Activated CD8-positive, alpha-beta T cell treated with anti-CD3 and anti-CD28 coated beads for 36 hours (primary cell): ENCODE measurements at regions of chr3 and their contacts with region 1.

Region 1: DNA sequence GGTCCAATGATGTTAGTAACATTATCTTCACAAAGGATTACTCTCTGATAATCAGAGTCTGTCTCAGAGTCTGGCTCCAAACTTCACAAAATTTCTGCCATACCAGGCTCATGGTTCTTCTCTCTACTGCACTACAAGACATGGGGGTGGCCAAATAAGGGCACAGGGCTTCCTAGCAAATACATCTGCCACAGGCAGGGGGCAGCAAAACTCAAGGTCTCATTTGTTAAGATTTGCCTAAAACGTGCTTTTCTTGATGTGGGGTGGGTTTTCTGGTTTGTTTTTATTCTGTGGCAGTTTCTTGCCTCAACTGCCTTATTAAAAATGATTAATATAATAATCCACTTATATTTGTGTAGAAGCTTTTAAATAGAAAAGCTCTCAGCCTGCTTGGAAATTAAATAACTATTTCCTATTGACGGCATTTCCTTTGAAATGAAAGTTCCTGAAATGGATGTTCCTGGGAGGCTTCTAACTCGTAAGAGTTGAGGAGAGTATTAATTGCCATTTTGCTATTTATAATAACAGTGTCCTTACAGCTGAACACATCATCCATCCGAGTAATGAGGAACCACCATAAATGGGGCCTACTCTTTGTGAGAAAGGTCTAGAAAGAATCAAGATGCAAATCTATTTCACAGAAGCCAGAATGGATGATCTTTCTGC is 53.8 kb downstream of the SST start:
- DNase-seq: peak; percentile 77
- ATAC-seq: peak; percentile 70
- H3K4me3 Mint-ChIP-seq: no peak overlapping the region
- H3K27ac Mint-ChIP-seq: no peak overlapping the region
- H3K4me1 Mint-ChIP-seq: peaks cover 4% of the 10 kb centered on the region
- H3K27me3 Mint-ChIP-seq: peaks cover 12% of the 10 kb centered on the region
- CTCF ChIP-seq: peak; percentile 79

Region 2: GRCh38 chr3:187565701-187566100 is 50.7 kb before region 1 on chr3:
- CTCF ChIA-PET with region 1: interaction called, 12 read pairs
- POLR2A ChIA-PET with region 1: no interaction called
- intact Hi-C with region 1: no loop called
- DNase-seq: no peak
- ATAC-seq: no peak
- H3K4me3 Mint-ChIP-seq: no peak overlapping the region
- H3K27ac Mint-ChIP-seq: no peak overlapping the region
- H3K4me1 Mint-ChIP-seq: no peaks in the 10 kb centered on the region
- H3K27me3 Mint-ChIP-seq: peaks cover 18% of the 10 kb centered on the region
- CTCF ChIP-seq: no peak

Region 3: DNA sequence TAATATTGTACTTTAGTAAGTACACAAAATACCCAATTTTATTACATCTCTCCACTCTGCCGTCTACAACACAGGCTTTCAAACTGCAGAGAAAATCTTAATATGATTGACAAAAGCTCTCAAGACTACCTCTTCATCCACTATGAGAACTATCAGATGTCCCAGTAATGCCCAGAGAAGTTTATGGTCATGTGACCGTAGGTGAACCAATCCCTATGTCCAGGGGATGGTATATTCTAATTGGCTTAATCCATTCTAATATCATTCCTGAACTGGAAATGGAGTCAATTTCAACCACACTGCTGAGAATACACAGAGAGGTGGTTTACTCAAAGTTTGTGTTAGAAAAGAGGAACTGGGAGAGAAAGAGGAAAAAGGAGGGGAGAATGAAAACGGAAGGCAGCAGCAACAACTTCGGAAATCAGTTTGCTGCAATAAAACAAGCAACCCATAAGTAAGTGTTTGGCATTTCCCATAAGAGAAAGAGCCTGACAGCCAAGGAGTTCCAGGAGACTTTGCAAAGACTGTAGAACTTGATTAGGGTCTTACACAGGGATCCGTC is 46.5 kb after region 1 on chr3:
- CTCF ChIA-PET with region 1: interaction called, 27 read pairs
- POLR2A ChIA-PET with region 1: no interaction called
- intact Hi-C with region 1: no loop called
- DNase-seq: no peak
- ATAC-seq: no peak
- H3K4me3 Mint-ChIP-seq: no peak overlapping the region
- H3K27ac Mint-ChIP-seq: no peak overlapping the region
- H3K4me1 Mint-ChIP-seq: peaks cover 7% of the 10 kb centered on the region
- H3K27me3 Mint-ChIP-seq: peaks cover 25% of the 10 kb centered on the region
- CTCF ChIP-seq: no peak

Region 4: GRCh38 chr3:187669675-187670504 is 53.5 kb after region 1 on chr3 and contains the start of gene SST:
- CTCF ChIA-PET with region 1: interaction called, 27 read pairs
- POLR2A ChIA-PET with region 1: interaction called, 5 read pairs
- intact Hi-C with region 1: loop called (anchors 5 kb)
- DNase-seq: peak; percentile 52
- ATAC-seq: no peak
- H3K4me3 Mint-ChIP-seq: no peak within 1 kb of the TSS
- H3K27ac Mint-ChIP-seq: no peak within 1 kb of the TSS
- H3K4me1 Mint-ChIP-seq: peaks cover 7% of the 10 kb centered on the region
- H3K27me3 Mint-ChIP-seq: peaks cover 44% of the 10 kb centered on the region
- CTCF ChIP-seq: no peak
- total RNA-seq, gene SST: not detected

Region 5: DNA sequence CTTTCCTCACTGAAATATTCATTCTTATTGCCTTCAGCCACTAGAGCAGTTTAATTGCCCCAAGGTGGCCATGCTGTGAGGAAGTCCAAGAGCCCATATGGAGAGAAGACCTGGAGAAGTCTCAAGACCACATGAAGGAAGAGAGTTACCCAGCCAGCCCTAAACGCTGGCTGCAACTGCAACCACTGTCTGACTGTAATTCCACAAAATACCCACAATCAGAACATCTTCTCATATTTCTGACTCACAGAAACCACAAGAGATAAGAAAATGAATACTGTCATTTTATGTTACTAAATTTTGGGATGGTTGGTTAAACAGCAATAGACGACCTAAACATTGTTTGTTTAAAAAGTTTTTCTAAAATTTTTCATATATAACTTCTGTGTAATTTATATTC is 68.4 kb after region 1 on chr3:
- CTCF ChIA-PET with region 1: interaction called, 89 read pairs
- POLR2A ChIA-PET with region 1: no interaction called
- intact Hi-C with region 1: no loop called
- DNase-seq: no peak
- ATAC-seq: peak; percentile 45
- H3K4me3 Mint-ChIP-seq: no peak overlapping the region
- H3K27ac Mint-ChIP-seq: no peak overlapping the region
- H3K4me1 Mint-ChIP-seq: peaks cover 7% of the 10 kb centered on the region
- H3K27me3 Mint-ChIP-seq: peaks cover 17% of the 10 kb centered on the region
- CTCF ChIP-seq: no peak

Region 6: GRCh38 chr3:187714404-187714979 is 98.1 kb after region 1 on chr3:
- CTCF ChIA-PET with region 1: interaction called, 46 read pairs
- POLR2A ChIA-PET with region 1: no interaction called
- intact Hi-C with region 1: loop called (anchors 10 kb)
- DNase-seq: peak; percentile 85
- ATAC-seq: peak; percentile 95
- H3K4me3 Mint-ChIP-seq: no peak overlapping the region
- H3K27ac Mint-ChIP-seq: no peak overlapping the region
- H3K4me1 Mint-ChIP-seq: peaks cover 9% of the 10 kb centered on the region
- H3K27me3 Mint-ChIP-seq: no peaks in the 10 kb centered on the region
- CTCF ChIP-seq: peak; percentile 90